ENCODE measurements at regions of chr4 and their contacts with region 1.

Region 1: GRCh38 chr4:81758574-81759264 is 287.0 kb upstream of the RASGEF1B start:
- DNase-seq: peak; percentile 17
- ATAC-seq: peak; percentile 65
- H3K4me3 Mint-ChIP-seq: peak overlapping the region; percentile 47
- H3K27ac Mint-ChIP-seq: peak overlapping the region; percentile 47
- H3K4me1 Mint-ChIP-seq: peaks cover 66% of the 10 kb centered on the region
- H3K27me3 Mint-ChIP-seq: no peaks in the 10 kb centered on the region
- CTCF ChIP-seq: no peak

Region 2: GRCh38 chr4:81343046-81343445 is 415.7 kb before region 1 on chr4:
- CTCF ChIA-PET with region 1: no interaction called
- POLR2A ChIA-PET with region 1: no interaction called
- intact Hi-C with region 1: no loop called
- DNase-seq: no peak
- ATAC-seq: no peak
- H3K4me3 Mint-ChIP-seq: no peak overlapping the region
- H3K27ac Mint-ChIP-seq: no peak overlapping the region
- H3K4me1 Mint-ChIP-seq: no peaks in the 10 kb centered on the region
- H3K27me3 Mint-ChIP-seq: peaks cover 17% of the 10 kb centered on the region
- CTCF ChIP-seq: no peak

Region 3: GRCh38 chr4:81747242-81747930 is 11.3 kb before region 1 on chr4:
- CTCF ChIA-PET with region 1: no interaction called
- POLR2A ChIA-PET with region 1: interaction called, 3 read pairs
- intact Hi-C with region 1: loop called (anchors 1 kb)
- DNase-seq: no peak
- ATAC-seq: no peak
- H3K4me3 Mint-ChIP-seq: no peak overlapping the region
- H3K27ac Mint-ChIP-seq: no peak overlapping the region
- H3K4me1 Mint-ChIP-seq: peaks cover 8% of the 10 kb centered on the region
- H3K27me3 Mint-ChIP-seq: no peaks in the 10 kb centered on the region
- CTCF ChIP-seq: no peak

Region 4: GRCh38 chr4:82097504-82097903 is 338.8 kb after region 1 on chr4:
- CTCF ChIA-PET with region 1: no interaction called
- POLR2A ChIA-PET with region 1: no interaction called
- intact Hi-C with region 1: no loop called
- DNase-seq: no peak
- ATAC-seq: no peak
- H3K4me3 Mint-ChIP-seq: no peak overlapping the region
- H3K27ac Mint-ChIP-seq: no peak overlapping the region
- H3K4me1 Mint-ChIP-seq: no peaks in the 10 kb centered on the region
- H3K27me3 Mint-ChIP-seq: peaks cover 5% of the 10 kb centered on the region
- CTCF ChIP-seq: no peak

Measured in activated B cell treated with CpG ODN at 0.5 μM for 24 hours (primary cell).